ENCODE measurements at regions of chr21 and their contacts with region 1.

Region 1: DNA sequence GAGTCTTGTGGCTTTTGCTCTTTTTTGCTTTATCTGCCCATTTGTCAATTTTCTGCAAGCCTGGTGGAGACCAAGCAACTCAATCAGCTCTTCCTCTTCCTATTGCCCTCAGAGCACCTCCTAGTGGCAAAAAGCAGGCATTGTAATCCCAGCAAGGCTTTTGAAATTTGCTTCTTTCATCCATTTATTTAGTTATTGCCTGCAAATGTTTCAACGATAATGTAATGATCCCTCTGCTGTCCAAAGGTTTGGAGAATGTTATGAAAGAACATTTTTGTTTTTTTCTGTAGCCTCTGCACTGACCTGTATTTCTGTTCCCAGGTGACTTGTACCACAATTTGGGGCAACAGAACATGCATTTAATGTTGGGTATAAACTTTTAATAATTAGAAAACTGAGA is 127.8 kb downstream of the GABPA start:
- DNase-seq: peak; percentile 50
- H3K4me3 Mint-ChIP-seq: no peak overlapping the region
- H3K27ac Mint-ChIP-seq: no peak overlapping the region
- H3K4me1 Mint-ChIP-seq: no peaks in the 10 kb centered on the region
- H3K27me3 Mint-ChIP-seq: no peaks in the 10 kb centered on the region
- CTCF ChIP-seq: peak; percentile 75

Region 2: GRCh38 chr21:25734904-25735645 is 127.5 kb before region 1 on chr21 and contains the starts of genes ATP5PF and GABPA:
- CTCF ChIA-PET with region 1: interaction called, 4 read pairs
- POLR2A ChIA-PET with region 1: interaction called, 8 read pairs
- intact Hi-C with region 1: loop called (anchors 2 kb)
- DNase-seq: peak; percentile 99
- H3K4me3 Mint-ChIP-seq: peak within 1 kb of the TSS; percentile 95
- H3K27ac Mint-ChIP-seq: peak within 1 kb of the TSS; percentile 100
- H3K4me1 Mint-ChIP-seq: no peaks in the 10 kb centered on the region
- H3K27me3 Mint-ChIP-seq: no peaks in the 10 kb centered on the region
- CTCF ChIP-seq: no peak
- total RNA-seq, gene ATP5PF: 136 and 143 TPM in 2 replicates
- total RNA-seq, gene GABPA: 16.2 and 16.3 TPM in 2 replicates

Region 3: DNA sequence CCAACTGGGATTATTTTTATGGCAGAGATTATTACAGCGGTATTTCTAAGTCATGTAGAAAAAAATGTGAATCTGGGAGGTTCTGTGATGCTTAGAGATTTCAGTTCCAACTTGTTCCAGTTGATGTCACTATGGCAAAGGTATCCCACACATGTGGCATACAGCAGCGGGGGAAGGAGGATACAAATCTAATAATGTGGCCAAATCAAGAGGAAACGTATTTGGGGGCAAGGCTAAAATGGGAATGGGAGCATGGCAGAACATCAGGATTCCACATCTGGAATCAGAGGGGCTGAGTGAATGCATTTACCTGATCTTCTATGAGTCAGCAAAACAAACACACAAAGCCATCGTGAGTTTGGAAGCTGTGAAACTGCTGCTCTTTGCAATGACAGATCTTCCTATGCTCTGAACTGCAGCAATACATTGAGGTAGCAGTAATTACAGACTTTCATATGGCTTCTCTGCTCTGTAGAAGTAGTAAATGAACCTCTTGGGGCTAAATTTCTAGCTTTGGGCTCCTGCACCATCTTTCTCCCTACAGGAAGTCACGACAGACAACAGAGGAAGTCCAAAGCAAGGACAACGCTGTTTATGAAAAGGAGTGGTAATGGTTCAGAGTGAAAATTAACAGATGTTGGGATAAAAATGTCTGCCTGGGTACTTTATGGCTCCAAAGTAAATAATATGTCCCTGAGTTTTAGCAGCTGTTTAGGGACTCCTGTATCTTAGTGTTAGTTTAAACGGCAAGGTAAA is 72.3 kb before region 1 on chr21:
- CTCF ChIA-PET with region 1: interaction called, 9 read pairs
- POLR2A ChIA-PET with region 1: interaction called, 7 read pairs
- intact Hi-C with region 1: loop called (anchors 2 kb)
- DNase-seq: peak; percentile 49
- H3K4me3 Mint-ChIP-seq: peak overlapping the region; percentile 64
- H3K27ac Mint-ChIP-seq: no peak overlapping the region
- H3K4me1 Mint-ChIP-seq: peaks cover 6% of the 10 kb centered on the region
- H3K27me3 Mint-ChIP-seq: peaks cover 24% of the 10 kb centered on the region
- CTCF ChIP-seq: peak; percentile 44